ENCODE measurements at regions of chr6 and their contacts with region 1.

Region 1: GRCh38 chr6:156707818-156708217 is 69.4 kb upstream of the ARID1B start:
- DNase-seq: no peak
- ATAC-seq: no peak
- H3K4me3 ChIP-seq: no peak overlapping the region
- H3K4me3 Mint-ChIP-seq: no peak overlapping the region
- H3K27ac ChIP-seq: no peak overlapping the region
- H3K27ac Mint-ChIP-seq: no peak overlapping the region
- H3K4me1 ChIP-seq: no peaks in the 10 kb centered on the region
- H3K4me1 Mint-ChIP-seq: no peaks in the 10 kb centered on the region
- H3K27me3 ChIP-seq: peaks cover 0 to 7% of the 10 kb centered on the region in 2 experiments
- H3K27me3 Mint-ChIP-seq: peaks cover 10 to 15% of the 10 kb centered on the region in 2 donors

Region 2: GRCh38 chr6:156485150-156485549 is 222.7 kb before region 1 on chr6:
- CTCF ChIA-PET with region 1: no interaction called
- POLR2A ChIA-PET with region 1: no interaction called
- DNase-seq: no peak
- ATAC-seq: no peak
- H3K4me3 ChIP-seq: no peak overlapping the region
- H3K4me3 Mint-ChIP-seq: no peak overlapping the region
- H3K27ac ChIP-seq: no peak overlapping the region
- H3K27ac Mint-ChIP-seq: no peak overlapping the region
- H3K4me1 ChIP-seq: no peaks in the 10 kb centered on the region
- H3K4me1 Mint-ChIP-seq: no peaks in the 10 kb centered on the region
- H3K27me3 ChIP-seq: no peaks in the 10 kb centered on the region
- H3K27me3 Mint-ChIP-seq: no peaks in the 10 kb centered on the region

Region 3: DNA sequence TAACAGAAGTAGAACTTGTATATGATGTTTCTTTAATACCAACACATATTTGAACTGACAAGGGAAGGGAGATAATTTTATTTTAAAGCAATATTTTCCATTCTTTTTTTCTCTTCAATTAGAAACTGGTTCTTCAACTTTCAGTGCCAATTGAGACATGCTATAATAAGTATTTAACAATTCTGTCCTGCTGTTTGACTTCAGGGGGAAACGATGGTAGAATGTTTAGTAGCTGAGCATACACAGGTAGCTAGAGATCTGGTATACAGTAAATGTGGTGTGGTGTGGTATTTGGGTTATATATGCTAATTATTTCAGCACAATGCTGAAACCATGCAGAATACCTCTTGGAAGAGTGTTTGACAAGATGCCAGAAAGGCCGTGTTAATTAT is 226.2 kb after region 1 on chr6:
- CTCF ChIA-PET with region 1: interaction called in 1 of 2 experiments, 10 read pairs
- POLR2A ChIA-PET with region 1: no interaction called
- DNase-seq: no peak
- ATAC-seq: no peak
- H3K4me3 ChIP-seq: no peak overlapping the region
- H3K4me3 Mint-ChIP-seq: no peak overlapping the region
- H3K27ac ChIP-seq: no peak overlapping the region
- H3K27ac Mint-ChIP-seq: no peak overlapping the region
- H3K4me1 ChIP-seq: peaks cover 2 to 8% of the 10 kb centered on the region in 2 experiments
- H3K4me1 Mint-ChIP-seq: peaks cover 78 to 83% (median 81%) of the 10 kb centered on the region in 3 donors
- H3K27me3 ChIP-seq: no peaks in the 10 kb centered on the region
- H3K27me3 Mint-ChIP-seq: no peaks in the 10 kb centered on the region

Measured in T-cell (primary cell).